ENCODE measurements at regions of chr14 and their contacts with region 1.

Region 1: DNA sequence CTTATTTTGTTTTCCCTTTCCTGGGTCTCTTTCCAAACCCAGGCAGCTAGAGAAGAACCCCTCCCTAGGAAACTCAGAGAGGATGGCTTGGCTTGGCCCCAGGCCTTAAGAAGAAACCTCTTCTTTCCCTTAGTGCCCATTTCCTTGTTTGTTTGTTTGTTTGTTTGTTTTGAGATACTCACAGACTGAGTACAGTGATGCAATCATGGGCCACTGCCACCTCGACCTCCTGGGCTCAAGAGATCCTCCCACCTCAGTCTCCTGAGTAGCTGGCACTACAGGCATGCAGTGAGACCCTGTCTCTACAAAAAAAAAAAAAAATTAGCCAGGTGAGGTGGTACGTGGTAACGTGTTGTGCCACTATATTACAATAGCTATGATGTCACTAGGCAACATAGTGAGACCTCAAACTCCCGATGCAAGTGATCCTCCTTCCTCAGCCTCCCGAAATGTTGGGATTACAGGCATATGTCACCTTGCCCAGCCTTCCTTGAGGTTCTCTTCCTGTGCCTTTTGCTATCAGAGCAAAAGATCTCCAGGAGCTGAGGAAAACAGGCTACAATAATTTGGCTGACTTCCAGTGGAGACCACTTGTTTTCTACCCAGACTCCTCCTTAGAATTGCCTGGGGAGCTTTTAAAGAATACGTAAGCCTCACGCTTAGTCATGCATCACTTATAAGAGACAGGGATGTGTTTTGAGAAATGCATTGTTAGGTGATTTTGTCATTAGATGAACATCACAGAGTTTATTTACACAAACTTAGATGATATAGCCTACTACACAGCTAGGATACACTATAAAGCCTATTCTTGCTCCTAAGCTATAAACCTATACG is 34.5 kb upstream of the LGALS3 start:
- DNase-seq: no peak
- ATAC-seq: no peak

Region 2: DNA sequence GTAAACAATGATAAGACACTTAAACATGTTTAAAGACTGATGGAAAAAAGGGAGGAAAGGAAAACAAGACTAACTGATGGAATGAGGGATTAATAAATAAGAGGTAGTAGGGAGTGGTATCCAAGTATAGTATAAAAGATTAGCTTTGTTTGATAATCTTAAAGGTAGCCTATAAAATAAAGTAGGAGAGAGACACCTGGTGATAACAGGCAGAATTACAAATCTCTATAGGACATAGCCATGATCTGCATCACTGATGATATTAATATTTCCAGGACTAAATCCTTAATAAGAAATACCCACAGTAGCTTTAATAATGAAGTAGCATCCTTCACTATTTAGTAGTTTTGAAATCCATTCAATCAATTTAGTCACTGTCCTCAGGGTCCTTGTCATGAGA is 66.5 kb after region 1 on chr14:
- intact Hi-C with region 1: loop called (anchors 1 kb)
- DNase-seq: no peak
- ATAC-seq: peak; percentile 64

Measured in left ventricle myocardium superior (tissue), 1 donor.